Left cardiac atrium (tissue), 4 donors: ENCODE measurements at regions of chr1 and their contacts with region 1.

Region 1: DNA sequence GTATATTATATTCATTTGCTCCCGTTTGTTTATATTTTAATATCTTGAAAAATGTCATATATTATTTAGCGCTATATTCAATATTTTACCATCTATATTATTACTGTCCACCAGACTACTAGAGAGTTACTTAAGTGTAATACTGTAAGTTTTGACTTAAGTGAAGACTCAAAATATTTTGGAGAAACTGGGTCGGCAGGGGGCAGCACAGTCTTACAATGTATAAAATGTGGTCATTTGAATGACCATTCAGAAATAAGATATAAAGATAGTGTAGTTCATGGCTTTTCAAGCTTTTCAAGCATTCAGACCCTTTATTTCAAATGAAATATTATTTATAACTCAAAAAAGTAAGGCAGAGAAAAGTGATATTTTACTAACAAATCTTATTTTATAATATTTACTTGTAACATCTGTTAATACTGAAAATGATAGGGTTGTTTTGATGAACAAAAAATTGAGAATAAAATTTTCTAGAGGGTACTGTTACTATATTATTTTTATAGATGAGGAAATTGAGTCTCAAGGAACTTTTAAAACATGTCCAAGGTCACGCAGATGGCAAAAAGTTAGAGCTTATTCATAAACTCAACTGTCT is 89.0 kb upstream of the SERTAD4 start:
- DNase-seq: peak; percentile 84
- ATAC-seq: peak; percentile 30 to 43

Region 2: DNA sequence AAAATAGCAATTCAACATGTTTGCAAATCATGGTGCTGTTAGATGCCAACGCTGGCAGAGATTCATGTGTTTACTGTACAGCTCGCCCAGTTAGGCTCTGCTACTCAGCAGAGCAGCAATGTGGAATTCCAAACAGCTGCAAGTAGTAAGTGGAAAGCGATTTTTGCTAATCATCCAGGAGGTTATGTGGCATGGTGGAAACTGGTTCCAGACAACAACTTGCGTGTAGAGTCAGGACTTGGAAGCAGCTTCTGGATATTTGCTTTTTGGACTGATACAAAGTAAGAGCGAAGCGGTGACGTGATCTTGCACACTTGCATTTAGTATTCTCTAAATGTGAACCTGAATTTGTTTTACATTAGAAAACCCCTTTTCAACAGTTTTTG is 158.0 kb after region 1 on chr1:
- intact Hi-C with region 1: loop called in 1 of 2 experiments (anchors 5 kb)
- DNase-seq: no peak
- ATAC-seq: peak; percentile 41 to 58

Region 3: DNA sequence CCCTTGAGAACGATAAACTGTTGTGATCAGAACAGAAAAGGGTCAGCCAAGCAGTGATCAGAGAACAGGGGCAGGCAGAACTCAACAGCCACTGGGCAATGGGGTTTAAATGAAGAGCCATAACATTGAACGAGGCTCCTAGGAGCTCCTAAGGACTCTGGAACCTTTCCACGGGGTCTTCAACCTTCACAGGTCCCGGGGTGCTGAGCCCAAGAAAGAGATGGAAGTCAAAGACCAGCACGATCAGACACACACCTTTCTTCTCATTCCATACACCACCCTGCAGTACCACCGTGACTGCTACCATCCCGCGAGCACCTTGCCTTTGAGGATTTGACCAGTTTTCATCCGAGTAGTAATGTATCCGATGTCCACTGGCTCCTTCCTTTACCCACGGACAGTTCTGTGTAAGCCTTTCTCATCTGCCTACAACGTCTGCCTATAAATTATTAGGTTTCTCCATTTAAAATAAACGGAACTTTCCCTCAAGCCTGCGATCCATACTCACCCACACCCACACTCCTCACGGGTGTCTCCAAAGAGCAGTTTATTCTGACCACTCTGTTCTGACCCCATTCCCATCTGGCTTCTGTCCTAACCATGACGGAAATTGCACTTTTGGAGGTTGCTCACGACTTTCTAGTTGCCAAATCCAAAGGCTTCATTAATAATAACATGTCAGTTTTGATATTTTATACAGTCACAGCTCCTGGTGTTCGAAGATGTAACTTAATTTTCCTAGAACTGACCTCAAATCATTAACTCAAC is 168.3 kb after region 1 on chr1:
- intact Hi-C with region 1: loop called (anchors 1 to 5 kb)
- DNase-seq: peak; percentile 48
- ATAC-seq: peak; percentile 72 to 78

Region 4: DNA sequence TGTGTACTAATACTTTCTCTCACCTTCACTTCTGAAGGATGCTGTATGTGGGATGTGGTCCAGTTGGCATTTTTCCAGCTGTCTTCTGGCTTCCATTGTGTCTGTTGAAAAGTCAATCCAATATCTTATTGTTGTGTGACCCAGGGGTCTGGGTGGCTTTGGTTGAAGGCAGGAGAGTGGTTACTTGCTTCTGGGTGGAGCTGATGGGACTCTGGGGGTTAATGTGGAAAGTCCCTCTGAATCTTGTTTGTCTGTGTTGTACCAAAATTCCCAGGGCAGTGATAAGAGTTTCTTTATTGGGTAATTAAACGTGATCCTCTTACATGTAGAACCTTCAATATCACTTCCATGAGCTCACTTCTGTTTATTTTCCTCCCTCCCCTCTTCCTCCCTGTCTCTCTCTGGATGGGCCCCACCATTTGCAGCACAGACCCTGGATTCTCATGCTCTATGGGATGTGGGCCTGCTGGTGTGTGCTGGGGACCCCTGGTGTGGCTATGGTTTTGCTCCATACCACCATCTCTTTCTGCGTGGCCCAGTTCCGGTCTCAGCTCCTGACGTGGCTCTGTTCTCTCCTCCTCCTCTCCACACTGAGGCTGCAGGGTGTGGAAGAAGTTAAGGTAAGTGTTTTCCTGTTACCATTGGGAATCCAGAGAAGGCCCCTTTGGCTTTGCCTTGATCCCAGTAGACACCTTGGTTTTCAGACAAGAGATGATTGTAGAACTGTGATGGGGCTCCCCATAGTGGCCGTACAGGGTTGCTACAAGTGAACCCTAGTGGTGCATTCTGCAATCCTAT is 256.7 kb after region 1 on chr1:
- intact Hi-C with region 1: loop called (anchors 5 to 10 kb)
- DNase-seq: peak; percentile 49
- ATAC-seq: peak; percentile 93 to 96